Breast epithelium (tissue), 4 donors: ENCODE measurements at regions of chr3 and their contacts with region 1.

Region 1: DNA sequence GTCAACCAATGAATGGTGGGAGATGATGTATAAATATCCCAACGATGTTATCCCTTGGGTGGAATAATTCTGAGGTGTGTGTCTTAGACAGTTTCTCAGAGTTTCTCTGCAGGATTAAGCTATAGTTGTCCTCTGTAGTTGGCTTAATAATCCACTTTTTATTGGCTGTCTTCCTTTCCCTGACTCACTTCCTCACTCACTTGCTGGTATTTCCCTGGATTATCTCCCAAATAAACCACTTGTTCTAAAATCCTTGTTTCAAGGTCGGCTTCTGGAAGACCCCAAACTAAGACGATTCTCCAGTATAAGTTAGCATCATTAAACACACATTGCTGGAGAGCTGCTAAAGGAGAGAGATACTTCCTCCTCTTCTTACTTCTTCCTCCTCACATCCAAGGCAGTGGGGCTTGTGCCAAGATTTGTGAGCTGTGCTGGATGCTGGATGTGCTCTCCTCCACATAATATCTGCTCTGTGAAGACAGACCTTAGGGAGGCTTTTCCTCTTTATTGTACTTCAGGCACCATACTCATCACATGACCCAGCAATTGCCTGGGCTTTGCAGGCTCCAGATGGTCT is 22.5 kb upstream of the ROPN1 start:
- DNase-seq: no peak
- H3K4me3 ChIP-seq: no peak overlapping the region
- H3K27ac ChIP-seq: no peak overlapping the region
- H3K4me1 ChIP-seq: no peaks in the 10 kb centered on the region
- H3K27me3 ChIP-seq: no peaks in the 10 kb centered on the region
- CTCF ChIP-seq: no peak
- POLR2A ChIP-seq: no peak

Region 2: GRCh38 chr3:123993818-123994217 is 20.6 kb before region 1 on chr3:
- intact Hi-C with region 1: loop called (anchors 1 kb)
- DNase-seq: no peak
- H3K4me3 ChIP-seq: no peak overlapping the region
- H3K27ac ChIP-seq: no peak overlapping the region
- H3K4me1 ChIP-seq: no peaks in the 10 kb centered on the region
- H3K27me3 ChIP-seq: no peaks in the 10 kb centered on the region
- CTCF ChIP-seq: no peak
- POLR2A ChIP-seq: no peak

Region 3: GRCh38 chr3:124026516-124026915 is 12.1 kb after region 1 on chr3:
- intact Hi-C with region 1: no loop called
- DNase-seq: no peak
- H3K4me3 ChIP-seq: no peak overlapping the region
- H3K27ac ChIP-seq: no peak overlapping the region
- H3K4me1 ChIP-seq: no peaks in the 10 kb centered on the region
- H3K27me3 ChIP-seq: no peaks in the 10 kb centered on the region
- CTCF ChIP-seq: no peak
- POLR2A ChIP-seq: no peak

Region 4: GRCh38 chr3:124383083-124383482 is 368.6 kb after region 1 on chr3:
- intact Hi-C with region 1: no loop called
- DNase-seq: no peak
- H3K4me3 ChIP-seq: no peak overlapping the region
- H3K27ac ChIP-seq: no peak overlapping the region
- H3K4me1 ChIP-seq: no peaks in the 10 kb centered on the region
- H3K27me3 ChIP-seq: no peaks in the 10 kb centered on the region
- CTCF ChIP-seq: no peak
- POLR2A ChIP-seq: no peak